ENCODE measurements at regions of chr1 and their contacts with region 1.

Region 1: DNA sequence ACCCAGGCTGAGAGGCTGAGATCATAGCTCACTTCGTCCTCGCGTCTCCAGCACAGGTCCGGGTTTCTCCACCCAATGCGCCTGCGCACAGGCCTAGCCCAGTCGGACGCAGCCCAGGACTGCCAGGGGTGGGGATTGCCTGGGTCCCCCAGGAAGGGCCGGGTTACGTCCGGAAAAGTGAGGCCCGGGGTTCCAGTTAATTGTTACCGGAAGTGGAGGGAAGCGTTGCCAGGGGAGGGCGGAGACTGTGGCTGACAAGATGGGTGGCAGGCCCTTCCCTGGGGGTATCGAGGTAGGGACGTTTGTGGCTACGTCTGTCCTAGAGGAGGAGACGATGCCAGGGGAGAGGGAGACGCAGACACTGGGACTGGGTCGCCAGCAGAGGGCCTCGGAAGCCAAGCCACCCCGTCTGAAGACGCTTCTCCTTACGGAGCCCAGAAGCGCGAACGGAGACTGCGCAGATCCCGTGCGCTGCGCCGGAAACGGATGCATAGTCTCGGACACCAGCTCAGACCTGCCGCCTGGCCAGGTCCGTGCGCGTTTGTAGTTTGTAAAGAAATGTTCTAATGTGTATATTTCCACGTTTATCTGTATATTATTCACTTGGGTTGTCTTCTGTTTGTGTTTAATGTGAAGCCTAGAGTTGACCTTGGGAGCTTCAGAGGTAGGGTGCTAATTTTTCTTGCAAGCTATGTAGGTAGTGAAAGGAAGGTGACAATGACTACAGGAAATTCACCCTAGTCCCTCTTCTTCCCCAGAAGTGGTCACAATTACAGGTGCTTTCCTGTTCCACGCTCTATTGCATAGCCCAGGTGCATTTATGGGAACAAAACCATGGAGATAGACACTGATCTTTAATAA is 7.3 kb downstream of the RSRP1 start:
- DNase-seq: peak; percentile 93 to 97
- H3K4me3 ChIP-seq: peak overlapping the region; percentile 48 to 54
- H3K27ac ChIP-seq: peak overlapping the region; percentile 84 to 85
- H3K4me1 ChIP-seq: peaks cover 0 to 64% (median 38%) of the 10 kb centered on the region in 4 donors
- H3K27me3 ChIP-seq: no peaks in the 10 kb centered on the region
- CTCF ChIP-seq: peak; percentile 53 to 66

Region 2: DNA sequence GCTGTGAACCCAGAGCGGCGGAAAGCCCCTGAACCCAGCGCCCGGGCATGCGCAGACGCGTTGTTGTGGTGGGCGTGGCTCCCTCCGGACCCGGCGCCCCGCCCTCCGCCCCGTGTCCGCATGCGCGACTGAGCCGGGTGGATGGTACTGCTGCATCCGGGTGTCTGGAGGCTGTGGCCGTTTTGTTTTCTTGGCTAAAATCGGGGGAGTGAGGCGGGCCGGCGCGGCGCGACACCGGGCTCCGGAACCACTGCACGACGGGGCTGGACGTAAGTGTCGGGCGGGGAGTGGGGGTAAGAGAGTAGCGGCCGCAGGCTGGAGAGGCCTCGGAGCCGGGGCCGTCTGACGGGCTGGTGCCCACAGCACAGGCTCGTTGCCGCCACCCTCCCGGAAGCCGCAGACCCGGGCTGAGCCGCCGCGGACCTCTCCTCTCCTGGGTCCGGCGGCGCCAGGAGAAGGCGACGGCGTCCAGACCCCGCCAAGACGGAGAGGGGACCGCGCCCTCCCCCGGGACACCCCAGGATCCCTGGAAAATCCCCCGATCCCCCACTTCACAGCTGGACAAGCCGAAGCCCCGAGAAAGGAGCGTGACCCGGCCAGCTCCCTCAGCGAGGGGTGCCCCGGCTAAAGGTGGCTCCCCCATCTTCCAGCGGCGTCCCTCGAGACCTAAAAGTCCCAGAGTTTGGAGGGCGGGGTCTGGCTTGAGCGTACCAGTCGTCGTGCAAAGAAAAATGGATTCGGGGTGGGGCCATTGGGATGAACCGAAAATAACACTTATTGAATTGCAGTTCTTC is 98.5 kb after region 1 on chr1 and contains the start of gene TMEM50A:
- intact Hi-C with region 1: loop called (anchors 5 kb)
- DNase-seq: peak; percentile 90 to 96
- H3K4me3 ChIP-seq: peak within 1 kb of the TSS; percentile 69 to 99
- H3K27ac ChIP-seq: peak within 1 kb of the TSS; percentile 98 to 100
- H3K4me1 ChIP-seq: peaks cover 0 to 34% (median 17%) of the 10 kb centered on the region in 4 donors
- H3K27me3 ChIP-seq: no peaks in the 10 kb centered on the region
- CTCF ChIP-seq: no peak

Region 3: GRCh38 chr1:25796811-25797458 is 557.0 kb after region 1 on chr1:
- intact Hi-C with region 1: loop called (anchors 10 kb)
- DNase-seq: peak; percentile 88 to 89
- H3K4me3 ChIP-seq: no peak overlapping the region
- H3K27ac ChIP-seq: peak overlapping the region in 1 of 2 donors; percentile 20
- H3K4me1 ChIP-seq: peaks cover 0 to 34% (median 29%) of the 10 kb centered on the region in 4 donors
- H3K27me3 ChIP-seq: no peaks in the 10 kb centered on the region
- CTCF ChIP-seq: peak; percentile 69 to 84

Measured in tibial artery (tissue), 4 donors.